ENCODE measurements at regions of chr13 and their contacts with region 1.

Region 1: DNA sequence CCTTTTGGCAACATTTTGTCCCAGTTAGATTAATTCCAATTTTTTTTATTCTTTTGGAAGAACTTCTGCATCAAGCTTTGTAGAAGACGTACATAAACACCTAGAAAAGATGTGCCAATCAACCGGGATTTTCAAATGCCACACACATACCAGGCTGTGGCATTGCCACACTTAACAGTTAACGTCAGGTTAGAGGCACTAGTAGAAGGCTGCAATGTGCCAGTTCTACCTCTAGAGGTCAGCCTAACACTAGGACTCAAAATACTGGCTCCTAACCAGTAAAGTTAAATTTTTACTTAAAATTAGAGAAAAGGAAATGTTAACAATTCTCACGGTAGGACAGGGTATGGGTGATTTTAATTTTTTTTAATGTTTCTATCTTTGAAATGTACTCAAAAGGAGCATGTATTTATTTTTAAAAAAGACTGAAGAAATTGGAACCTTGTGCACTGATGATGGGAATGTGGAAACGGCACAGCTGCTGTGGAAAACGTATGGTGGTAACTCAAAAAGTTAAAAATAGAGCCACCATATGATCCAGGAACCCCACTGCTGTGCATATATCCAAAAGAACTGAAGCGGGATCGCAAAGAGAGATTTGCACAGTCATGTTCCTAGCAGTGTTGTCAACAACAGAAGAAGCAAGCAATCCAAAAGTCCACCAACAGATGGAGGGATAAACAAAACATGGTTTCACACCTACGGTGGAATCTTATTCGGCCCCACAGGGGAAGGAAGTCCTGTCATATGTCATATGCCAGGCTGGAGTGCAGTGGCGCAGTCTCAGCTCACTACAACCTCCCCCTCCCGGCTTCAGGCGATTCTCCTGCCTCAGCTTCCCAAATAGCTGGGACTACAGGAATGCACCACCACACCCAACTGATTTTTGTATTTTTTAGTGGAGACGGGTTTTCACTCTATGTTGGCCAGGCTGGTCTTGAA is 30.3 kb downstream of the CRYL1 start:
- DNase-seq: peak; percentile 24
- H3K4me3 ChIP-seq: peak overlapping the region; percentile 4; the same call in 1 of the 2 replicates
- CTCF ChIP-seq: peak; percentile 75

Region 2: DNA sequence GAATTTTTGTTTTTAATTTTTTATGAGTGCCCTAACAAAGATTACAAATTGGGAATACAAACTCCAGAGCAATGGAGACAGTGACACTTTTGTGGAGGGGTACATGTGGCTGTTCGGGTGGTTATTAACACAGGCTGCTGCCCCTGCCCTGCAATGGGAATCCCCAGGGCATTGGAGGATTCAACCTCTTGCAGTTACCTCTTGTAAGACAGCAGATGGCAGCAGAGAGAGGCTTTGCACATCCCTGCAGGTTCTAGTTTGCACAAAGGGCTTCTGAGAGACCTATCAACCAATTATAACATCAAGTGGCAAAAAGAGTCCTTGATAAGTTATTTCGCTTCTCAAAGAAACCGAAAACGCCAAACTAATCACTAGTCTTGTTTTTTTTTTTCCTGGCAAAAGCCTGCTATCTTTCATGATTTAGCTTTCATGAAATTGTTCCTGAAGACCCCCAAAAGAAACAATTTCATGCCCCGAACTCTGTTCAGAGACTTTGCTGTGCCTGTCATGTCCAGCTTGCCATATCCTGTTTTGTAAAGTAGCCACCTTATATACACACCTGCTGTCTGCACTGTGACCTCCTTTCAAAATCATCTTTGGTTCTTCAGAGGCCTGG is 313.0 kb before region 1 on chr13:
- CTCF ChIA-PET with region 1: interaction called, 13 read pairs
- POLR2A ChIA-PET with region 1: no interaction called
- DNase-seq: peak; percentile 36
- H3K4me3 ChIP-seq: no peak overlapping the region
- CTCF ChIP-seq: peak; percentile 84

Region 3: GRCh38 chr13:20482275-20482761 is 13.0 kb before region 1 on chr13:
- CTCF ChIA-PET with region 1: interaction called, 21 read pairs
- POLR2A ChIA-PET with region 1: no interaction called
- DNase-seq: no peak
- H3K4me3 ChIP-seq: no peak overlapping the region
- CTCF ChIP-seq: no peak

Region 4: DNA sequence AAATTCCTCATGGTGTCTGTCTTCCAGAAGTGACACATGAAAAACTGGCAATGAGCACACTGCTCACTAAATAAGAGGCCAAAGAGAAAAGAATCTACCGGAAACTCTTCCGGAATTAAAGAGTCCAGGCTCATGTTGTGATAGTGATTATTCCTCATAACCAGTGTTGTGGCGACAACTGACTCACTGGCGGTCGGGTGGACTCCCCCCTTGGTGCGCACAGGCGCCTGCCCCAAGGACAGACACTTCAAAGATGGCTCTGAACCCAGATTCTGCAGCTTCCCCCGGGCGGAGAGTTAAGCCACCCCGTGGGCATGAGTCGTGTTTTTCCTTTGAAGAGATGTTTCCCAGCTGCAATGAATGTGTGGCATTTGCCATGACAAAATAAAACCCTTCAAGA is 218.4 kb after region 1 on chr13:
- CTCF ChIA-PET with region 1: interaction called, 19 read pairs
- POLR2A ChIA-PET with region 1: no interaction called
- DNase-seq: no peak
- H3K4me3 ChIP-seq: no peak overlapping the region
- CTCF ChIP-seq: no peak

Region 5: GRCh38 chr13:20721454-20722357 is 226.4 kb after region 1 on chr13:
- CTCF ChIA-PET with region 1: interaction called, 13 read pairs
- POLR2A ChIA-PET with region 1: no interaction called
- DNase-seq: no peak
- H3K4me3 ChIP-seq: peak overlapping the region; percentile 44
- CTCF ChIP-seq: peak; percentile 17

Measured in AG04449 (cell line).